GM13976 (cell line): ENCODE measurements at regions of chr15 and their contacts with region 1.

Region 1: DNA sequence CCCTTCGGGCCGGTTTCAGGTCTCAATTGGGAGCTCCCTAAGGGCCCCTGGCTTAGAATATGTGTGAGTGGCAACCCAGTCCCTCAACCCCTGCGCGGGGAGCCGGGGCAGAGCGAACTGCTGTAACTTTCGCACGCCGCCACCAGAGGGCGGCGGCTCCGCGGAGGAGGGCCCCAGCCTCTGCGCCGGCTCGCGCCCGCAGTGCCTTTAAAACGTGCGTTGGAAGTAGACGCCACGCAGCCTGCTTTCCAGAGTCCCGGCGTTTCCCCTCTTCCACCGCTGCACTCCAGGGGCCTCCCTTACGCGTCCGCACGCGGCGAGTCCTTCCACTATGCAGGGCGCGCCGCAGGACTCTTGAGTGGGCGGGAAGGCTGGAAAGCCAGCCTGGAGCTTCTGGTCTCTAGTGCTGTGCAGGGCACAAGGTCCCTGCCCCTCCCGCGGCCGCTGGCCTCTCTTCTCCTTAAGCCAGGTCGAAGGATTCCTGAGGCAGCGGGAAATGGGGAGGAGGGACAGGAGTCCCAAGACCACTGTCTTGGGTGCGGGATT is 23.7 kb upstream of the RNU6-1 start:
- DNase-seq: peak; percentile 88
- CTCF ChIP-seq: peak; percentile 83

Region 2: GRCh38 chr15:68053701-68054627 is 190.4 kb after region 1 on chr15 and contains the start of gene PIAS1:
- in situ Hi-C with region 1: loop called (anchors 25 kb)
- DNase-seq: peak; percentile 98
- CTCF ChIP-seq: no peak

Region 3: GRCh38 chr15:68154923-68155559 is 291.5 kb after region 1 on chr15:
- in situ Hi-C with region 1: loop called (anchors 25 kb)
- DNase-seq: peak; percentile 13
- CTCF ChIP-seq: peak; percentile 41